ENCODE measurements at regions of chr13 and their contacts with region 1.

Region 1: GRCh38 chr13:73702419-73703071 is 431.7 kb downstream of the KLF12 start:
- DNase-seq: peak; percentile 8 to 81 (median 38)
- ATAC-seq: peak; percentile 84
- H3K4me3 ChIP-seq: peak overlapping the region; percentile 40
- H3K4me3 Mint-ChIP-seq: peak overlapping the region; percentile 83
- H3K27ac ChIP-seq: peak overlapping the region; percentile 70 to 76
- H3K27ac Mint-ChIP-seq: peak overlapping the region; percentile 98
- H3K4me1 ChIP-seq: peaks cover 21% of the 10 kb centered on the region
- H3K4me1 Mint-ChIP-seq: peaks cover 53% of the 10 kb centered on the region
- H3K27me3 ChIP-seq: no peaks in the 10 kb centered on the region
- H3K27me3 Mint-ChIP-seq: no peaks in the 10 kb centered on the region
- CTCF ChIP-seq: no peak

Region 2: DNA sequence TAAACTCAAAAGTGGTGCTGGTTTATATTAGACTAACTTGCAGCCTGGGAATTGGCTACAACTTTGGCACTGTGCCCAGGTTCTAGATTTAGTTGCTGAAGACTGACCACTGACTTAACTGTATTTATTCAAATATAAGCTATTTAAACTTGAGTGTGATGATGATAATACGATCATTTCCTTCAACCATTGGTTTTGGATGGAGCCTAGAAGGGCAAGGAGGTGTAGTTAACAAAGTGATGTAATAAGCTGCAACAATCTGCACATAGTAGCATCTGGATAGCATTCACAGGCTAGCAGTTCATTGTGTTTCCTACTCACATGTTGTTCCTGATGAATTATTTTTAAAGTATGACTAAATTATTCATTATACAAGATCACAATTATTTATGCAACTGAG is 1780.4 kb before region 1 on chr13:
- CTCF ChIA-PET with region 1: no interaction called
- POLR2A ChIA-PET with region 1: no interaction called
- intact Hi-C with region 1: no loop called
- DNase-seq: no peak
- ATAC-seq: no peak
- H3K4me3 ChIP-seq: no peak overlapping the region
- H3K4me3 Mint-ChIP-seq: no peak overlapping the region
- H3K27ac ChIP-seq: no peak overlapping the region
- H3K27ac Mint-ChIP-seq: no peak overlapping the region
- H3K4me1 ChIP-seq: no peaks in the 10 kb centered on the region
- H3K4me1 Mint-ChIP-seq: no peaks in the 10 kb centered on the region
- H3K27me3 ChIP-seq: no peaks in the 10 kb centered on the region
- H3K27me3 Mint-ChIP-seq: no peaks in the 10 kb centered on the region
- CTCF ChIP-seq: no peak

Region 3: DNA sequence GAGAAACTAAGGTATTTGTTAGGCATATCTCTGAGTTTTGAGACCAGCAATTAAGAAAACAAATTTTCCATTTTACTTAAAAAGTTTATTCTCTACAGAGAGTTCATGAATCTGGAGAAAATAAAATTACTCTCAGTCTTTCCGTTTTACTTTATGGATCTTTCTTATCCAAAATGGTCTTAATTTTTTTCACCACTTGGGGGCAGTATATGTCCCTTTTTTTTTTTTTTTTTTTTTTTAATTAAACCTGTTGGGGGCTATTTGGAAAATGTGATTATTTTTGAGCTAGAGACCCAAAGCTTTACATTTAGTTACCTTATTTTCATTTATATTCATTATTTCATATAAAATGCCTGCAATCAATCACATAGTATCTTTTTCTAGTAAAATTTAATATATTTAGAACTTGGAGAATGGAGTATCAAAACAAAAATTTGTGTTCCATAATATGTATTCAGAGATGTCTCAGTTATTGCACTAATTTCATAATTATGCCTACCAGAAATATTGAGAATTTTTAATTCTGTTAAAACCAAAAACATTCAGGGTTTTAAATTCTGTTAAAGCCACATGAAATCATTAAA is 893.5 kb before region 1 on chr13:
- CTCF ChIA-PET with region 1: no interaction called
- POLR2A ChIA-PET with region 1: interaction called, 3 read pairs
- intact Hi-C with region 1: loop called in 1 of 2 experiments (anchors 2 kb)
- DNase-seq: peak in 3 of 14 experiments; percentile 19 to 56 (median 55)
- ATAC-seq: peak; percentile 29
- H3K4me3 ChIP-seq: no peak overlapping the region
- H3K4me3 Mint-ChIP-seq: no peak overlapping the region
- H3K27ac ChIP-seq: no peak overlapping the region
- H3K27ac Mint-ChIP-seq: peak overlapping the region; percentile 49
- H3K4me1 ChIP-seq: no peaks in the 10 kb centered on the region
- H3K4me1 Mint-ChIP-seq: no peaks in the 10 kb centered on the region
- H3K27me3 ChIP-seq: no peaks in the 10 kb centered on the region
- H3K27me3 Mint-ChIP-seq: no peaks in the 10 kb centered on the region
- CTCF ChIP-seq: peak; percentile 90

Region 4: GRCh38 chr13:73058736-73059459 is 643.6 kb before region 1 on chr13 and contains the start of gene KLF5:
- CTCF ChIA-PET with region 1: no interaction called
- POLR2A ChIA-PET with region 1: interaction called, 13 read pairs
- intact Hi-C with region 1: no loop called
- DNase-seq: peak; percentile 90 to 97 (median 95)
- ATAC-seq: peak; percentile 94
- H3K4me3 ChIP-seq: peak within 1 kb of the TSS; percentile 63
- H3K4me3 Mint-ChIP-seq: peak within 1 kb of the TSS; percentile 96
- H3K27ac ChIP-seq: no peak within 1 kb of the TSS
- H3K27ac Mint-ChIP-seq: peak within 1 kb of the TSS; percentile 75
- H3K4me1 ChIP-seq: peaks cover 17% of the 10 kb centered on the region
- H3K4me1 Mint-ChIP-seq: peaks cover 22% of the 10 kb centered on the region
- H3K27me3 ChIP-seq: peaks cover 6 to 26% of the 10 kb centered on the region in 2 experiments
- H3K27me3 Mint-ChIP-seq: peaks cover 32% of the 10 kb centered on the region
- CTCF ChIP-seq: no peak
- total RNA-seq, gene KLF5: 10.8 to 12.3 TPM

Region 5: DNA sequence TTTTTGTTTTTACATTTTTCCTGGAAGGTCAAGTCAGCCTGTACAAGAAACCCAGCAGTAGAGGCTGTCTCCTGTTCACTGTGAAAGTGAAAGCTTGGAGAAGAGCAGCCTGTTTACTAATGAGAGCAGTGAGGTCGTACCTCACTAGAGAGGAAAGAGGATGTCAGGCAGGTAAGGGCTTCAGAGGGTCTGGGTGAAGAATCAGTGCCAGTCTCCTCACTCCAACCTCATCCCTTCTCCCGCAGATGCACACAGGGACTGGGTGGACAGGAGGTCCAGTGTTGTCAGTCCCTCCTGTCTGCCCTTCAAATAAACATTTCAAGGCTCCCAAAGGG is 181.3 kb before region 1 on chr13:
- CTCF ChIA-PET with region 1: no interaction called
- POLR2A ChIA-PET with region 1: interaction called, 3 read pairs
- intact Hi-C with region 1: loop called (anchors 5 to 10 kb)
- DNase-seq: peak in 8 of 14 experiments; percentile 1 to 68 (median 31)
- ATAC-seq: peak; percentile 84
- H3K4me3 ChIP-seq: peak overlapping the region; percentile 50
- H3K4me3 Mint-ChIP-seq: peak overlapping the region; percentile 84
- H3K27ac ChIP-seq: peak overlapping the region; percentile 31 to 59
- H3K27ac Mint-ChIP-seq: peak overlapping the region; percentile 90
- H3K4me1 ChIP-seq: peaks cover 9% of the 10 kb centered on the region
- H3K4me1 Mint-ChIP-seq: peaks cover 23% of the 10 kb centered on the region
- H3K27me3 ChIP-seq: no peaks in the 10 kb centered on the region
- H3K27me3 Mint-ChIP-seq: no peaks in the 10 kb centered on the region
- CTCF ChIP-seq: no peak

Region 6: DNA sequence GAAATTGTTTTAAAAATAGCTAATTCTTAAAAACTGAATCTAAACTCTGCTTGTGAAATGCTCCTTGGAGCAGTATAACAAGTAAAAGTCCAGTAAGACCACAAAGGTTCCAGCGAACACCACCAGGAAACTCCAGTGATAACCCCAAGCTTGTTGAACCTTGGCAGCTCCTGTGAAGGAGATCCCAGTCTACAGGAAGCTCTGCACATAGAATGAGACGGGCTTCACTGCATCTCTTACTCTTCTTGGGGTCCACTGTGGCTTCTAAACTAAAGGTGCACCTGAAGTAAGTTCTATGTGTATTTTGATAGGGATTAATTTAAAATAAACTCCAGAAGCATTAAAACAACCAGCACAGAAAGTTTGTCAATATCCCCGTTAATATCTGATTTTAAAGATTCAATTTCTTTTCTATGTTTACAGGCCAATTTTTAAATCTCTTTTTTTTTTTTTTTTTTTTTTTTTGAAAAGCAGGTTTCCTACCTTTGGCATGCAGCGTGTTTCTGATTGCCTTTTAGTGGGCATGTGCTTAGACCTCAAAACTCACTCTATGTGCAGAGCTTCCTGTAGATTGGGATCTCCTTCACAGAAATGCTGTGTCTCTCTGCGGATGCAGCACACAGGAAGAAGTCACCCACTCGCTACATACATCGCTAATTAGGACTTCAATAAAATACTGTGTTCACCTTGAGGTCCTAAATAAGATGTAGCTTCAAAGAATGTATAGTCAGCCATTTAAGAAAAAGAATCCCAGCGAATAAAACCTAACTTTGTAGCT is 76.8 kb before region 1 on chr13:
- CTCF ChIA-PET with region 1: no interaction called
- POLR2A ChIA-PET with region 1: interaction called, 3 read pairs
- intact Hi-C with region 1: loop called in 1 of 2 experiments (anchors 5 kb)
- DNase-seq: peak in 11 of 14 experiments; percentile 3 to 83 (median 38)
- ATAC-seq: peak; percentile 99
- H3K4me3 ChIP-seq: no peak overlapping the region
- H3K4me3 Mint-ChIP-seq: peak overlapping the region; percentile 58
- H3K27ac ChIP-seq: peak overlapping the region in 1 of 2 donors; percentile 41
- H3K27ac Mint-ChIP-seq: peak overlapping the region; percentile 76
- H3K4me1 ChIP-seq: peaks cover 17% of the 10 kb centered on the region
- H3K4me1 Mint-ChIP-seq: peaks cover 61% of the 10 kb centered on the region
- H3K27me3 ChIP-seq: no peaks in the 10 kb centered on the region
- H3K27me3 Mint-ChIP-seq: no peaks in the 10 kb centered on the region
- CTCF ChIP-seq: no peak

Region 7: DNA sequence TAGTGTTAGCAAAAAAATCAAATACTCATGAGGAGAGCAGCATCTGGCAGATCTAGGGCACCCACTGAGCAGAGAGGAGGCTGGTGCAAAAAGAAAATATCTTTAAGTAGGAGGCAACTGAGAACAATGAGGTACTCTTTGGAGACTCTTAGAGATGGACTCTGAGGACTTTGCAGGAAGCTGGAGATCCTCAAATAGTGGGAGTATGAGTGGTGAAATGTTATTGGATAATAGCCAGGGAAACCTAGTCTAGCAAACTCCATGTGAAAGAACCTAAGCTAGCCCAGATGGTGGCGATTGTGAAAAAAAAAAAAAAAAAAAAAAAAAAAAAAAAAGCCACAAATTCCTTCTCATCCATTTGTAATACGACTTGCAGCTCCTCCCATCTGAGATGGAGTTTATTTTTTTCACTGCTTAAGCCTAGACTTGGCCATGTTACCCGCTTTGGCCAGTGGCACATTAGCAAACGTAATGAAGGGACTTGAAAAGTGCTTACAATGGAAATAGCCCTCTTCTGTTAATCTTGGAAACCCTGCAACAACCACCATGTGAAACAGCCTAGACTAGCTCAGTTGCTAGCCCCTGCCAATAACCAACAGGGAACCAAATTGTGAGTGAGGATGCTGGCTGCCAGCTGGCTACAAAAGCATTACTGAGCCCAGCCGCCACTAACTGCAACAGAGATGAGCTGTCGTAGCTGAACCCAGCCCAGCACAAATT is 44.6 kb before region 1 on chr13:
- CTCF ChIA-PET with region 1: no interaction called
- POLR2A ChIA-PET with region 1: no interaction called
- intact Hi-C with region 1: no loop called
- DNase-seq: no peak
- ATAC-seq: no peak
- H3K4me3 ChIP-seq: no peak overlapping the region
- H3K4me3 Mint-ChIP-seq: no peak overlapping the region
- H3K27ac ChIP-seq: no peak overlapping the region
- H3K27ac Mint-ChIP-seq: no peak overlapping the region
- H3K4me1 ChIP-seq: no peaks in the 10 kb centered on the region
- H3K4me1 Mint-ChIP-seq: no peaks in the 10 kb centered on the region
- H3K27me3 ChIP-seq: no peaks in the 10 kb centered on the region
- H3K27me3 Mint-ChIP-seq: no peaks in the 10 kb centered on the region
- CTCF ChIP-seq: no peak

Region 8: DNA sequence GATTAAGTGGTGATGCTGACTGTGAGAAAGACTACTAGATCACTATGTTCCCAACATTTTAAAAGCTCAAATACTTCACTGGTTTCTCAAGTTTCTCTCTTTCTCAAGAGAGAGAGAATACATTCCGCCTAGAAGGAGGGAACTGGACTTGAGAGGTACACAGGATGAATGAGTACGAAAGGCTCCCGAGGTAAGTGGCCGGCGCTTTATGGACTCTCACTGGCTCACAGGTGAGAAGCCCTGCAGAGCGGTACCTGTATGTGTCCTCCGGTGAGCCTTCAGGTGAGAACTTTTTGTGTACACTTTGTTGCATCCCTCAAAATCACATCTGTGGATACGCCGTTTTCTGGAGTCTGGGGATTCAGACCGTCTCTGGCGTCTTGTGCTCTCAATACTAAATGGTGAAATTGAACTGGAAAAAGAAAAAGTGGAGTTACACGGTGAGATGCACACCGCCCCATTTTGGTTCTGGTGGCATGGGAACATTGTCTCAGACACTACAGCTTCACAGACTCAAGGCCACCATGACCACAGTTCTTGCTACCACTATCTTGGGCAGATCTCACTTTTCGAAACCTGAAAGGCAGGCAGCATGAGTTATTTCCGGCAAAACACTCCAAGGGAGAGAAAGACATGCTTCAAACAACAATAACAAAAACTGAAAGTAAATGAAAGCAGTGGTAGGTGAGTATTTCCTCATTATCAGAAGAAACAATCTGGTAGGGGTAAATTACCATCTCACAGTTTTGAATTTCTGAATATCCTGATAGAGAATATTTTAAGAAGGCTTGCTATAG is 12.8 kb after region 1 on chr13:
- CTCF ChIA-PET with region 1: interaction called, 8 read pairs
- POLR2A ChIA-PET with region 1: interaction called, 19 read pairs
- intact Hi-C with region 1: loop called in 1 of 2 experiments (anchors 1 kb)
- DNase-seq: peak; percentile 21 to 94 (median 46)
- ATAC-seq: peak; percentile 88
- H3K4me3 ChIP-seq: peak overlapping the region; percentile 34
- H3K4me3 Mint-ChIP-seq: peak overlapping the region; percentile 73
- H3K27ac ChIP-seq: peak overlapping the region; percentile 62 to 73
- H3K27ac Mint-ChIP-seq: peak overlapping the region; percentile 94
- H3K4me1 ChIP-seq: peaks cover 35% of the 10 kb centered on the region
- H3K4me1 Mint-ChIP-seq: peaks cover 53% of the 10 kb centered on the region
- H3K27me3 ChIP-seq: no peaks in the 10 kb centered on the region
- H3K27me3 Mint-ChIP-seq: no peaks in the 10 kb centered on the region
- CTCF ChIP-seq: no peak